ENCODE measurements at regions of chr4 and their contacts with region 1.

Region 1: DNA sequence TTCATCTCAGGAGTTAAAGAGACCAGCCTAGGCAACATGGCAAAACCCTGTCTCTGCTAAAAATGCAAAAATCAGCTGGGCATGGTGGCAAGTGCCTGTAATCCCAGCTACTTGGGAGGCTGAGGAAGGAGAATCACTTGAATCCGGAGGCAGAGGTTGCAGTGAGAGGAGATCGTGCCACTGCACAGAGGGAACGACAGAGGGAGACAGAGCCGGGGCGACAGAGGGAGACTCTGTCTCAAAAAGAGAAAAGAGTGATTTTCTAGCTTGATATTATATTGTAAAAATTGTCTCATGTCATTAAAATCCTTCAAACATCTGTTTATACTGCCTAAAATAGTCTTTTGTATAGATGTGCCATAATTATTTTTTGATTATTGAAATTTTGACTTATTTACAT is 225.4 kb upstream of the AGA start:
- DNase-seq: peak in 1 of 2 experiments; percentile 30
- H3K4me3 ChIP-seq: no peak overlapping the region
- H3K4me3 Mint-ChIP-seq: no peak overlapping the region
- H3K27ac Mint-ChIP-seq: no peak overlapping the region
- H3K4me1 ChIP-seq: no peaks in the 10 kb centered on the region
- H3K4me1 Mint-ChIP-seq: no peaks in the 10 kb centered on the region
- H3K27me3 ChIP-seq: no peaks in the 10 kb centered on the region
- H3K27me3 Mint-ChIP-seq: no peaks in the 10 kb centered on the region
- CTCF ChIP-seq: peak; percentile 45 to 62

Region 2: GRCh38 chr4:177250056-177250696 is 417.5 kb before region 1 on chr4:
- CTCF ChIA-PET with region 1: no interaction called
- POLR2A ChIA-PET with region 1: no interaction called
- intact Hi-C with region 1: loop called (anchors 5 kb)
- DNase-seq: peak; percentile 54 to 76
- H3K4me3 ChIP-seq: no peak overlapping the region
- H3K4me3 Mint-ChIP-seq: no peak overlapping the region
- H3K27ac Mint-ChIP-seq: no peak overlapping the region
- H3K4me1 ChIP-seq: no peaks in the 10 kb centered on the region
- H3K4me1 Mint-ChIP-seq: no peaks in the 10 kb centered on the region
- H3K27me3 ChIP-seq: no peaks in the 10 kb centered on the region
- H3K27me3 Mint-ChIP-seq: peaks cover 12% of the 10 kb centered on the region
- CTCF ChIP-seq: peak; percentile 82 to 94

Region 3: DNA sequence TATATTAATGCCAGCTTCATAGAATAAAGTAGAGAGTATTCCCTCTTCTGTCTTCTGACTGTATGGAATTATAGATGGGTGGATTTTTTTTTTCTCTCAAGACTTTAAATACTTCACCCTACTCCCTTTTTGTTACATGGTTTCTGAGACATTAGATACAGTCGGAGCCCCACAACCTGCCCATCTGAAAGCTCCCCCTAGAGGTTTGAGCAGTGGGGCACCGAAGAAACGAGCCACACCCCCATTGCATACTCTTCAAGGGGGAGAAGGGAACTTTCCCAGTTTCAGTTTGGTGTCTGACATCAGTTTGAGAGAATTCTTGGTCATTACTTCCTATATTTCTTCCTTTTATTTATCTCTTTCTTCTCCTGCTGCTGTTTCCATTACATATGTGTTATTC is 212.2 kb after region 1 on chr4:
- CTCF ChIA-PET with region 1: no interaction called
- POLR2A ChIA-PET with region 1: no interaction called
- intact Hi-C with region 1: loop called (anchors 1 kb)
- DNase-seq: peak in 1 of 2 experiments; percentile 25
- H3K4me3 ChIP-seq: no peak overlapping the region
- H3K4me3 Mint-ChIP-seq: no peak overlapping the region
- H3K27ac Mint-ChIP-seq: no peak overlapping the region
- H3K4me1 ChIP-seq: no peaks in the 10 kb centered on the region
- H3K4me1 Mint-ChIP-seq: no peaks in the 10 kb centered on the region
- H3K27me3 ChIP-seq: no peaks in the 10 kb centered on the region
- H3K27me3 Mint-ChIP-seq: no peaks in the 10 kb centered on the region
- CTCF ChIP-seq: peak; percentile 27 to 28

Region 4: GRCh38 chr4:178086320-178086719 is 418.6 kb after region 1 on chr4:
- CTCF ChIA-PET with region 1: interaction called, 5 read pairs
- POLR2A ChIA-PET with region 1: no interaction called
- intact Hi-C with region 1: loop called (anchors 1 kb)
- DNase-seq: peak in 1 of 2 experiments; percentile 9
- H3K4me3 ChIP-seq: no peak overlapping the region
- H3K4me3 Mint-ChIP-seq: no peak overlapping the region
- H3K27ac Mint-ChIP-seq: peak overlapping the region; percentile 22
- H3K4me1 ChIP-seq: no peaks in the 10 kb centered on the region
- H3K4me1 Mint-ChIP-seq: peaks cover 7% of the 10 kb centered on the region
- H3K27me3 ChIP-seq: no peaks in the 10 kb centered on the region
- H3K27me3 Mint-ChIP-seq: no peaks in the 10 kb centered on the region
- CTCF ChIP-seq: peak; percentile 7 to 21

Region 5: GRCh38 chr4:178275671-178276360 is 608.1 kb after region 1 on chr4:
- CTCF ChIA-PET with region 1: no interaction called
- POLR2A ChIA-PET with region 1: no interaction called
- intact Hi-C with region 1: loop called (anchors 2 kb)
- DNase-seq: no peak
- H3K4me3 ChIP-seq: no peak overlapping the region
- H3K4me3 Mint-ChIP-seq: no peak overlapping the region
- H3K27ac Mint-ChIP-seq: no peak overlapping the region
- H3K4me1 ChIP-seq: no peaks in the 10 kb centered on the region
- H3K4me1 Mint-ChIP-seq: no peaks in the 10 kb centered on the region
- H3K27me3 ChIP-seq: no peaks in the 10 kb centered on the region
- H3K27me3 Mint-ChIP-seq: no peaks in the 10 kb centered on the region
- CTCF ChIP-seq: peak in 1 of 2 experiments; percentile 2